ENCODE measurements at regions of chr11 and their contacts with region 1.

Region 1: DNA sequence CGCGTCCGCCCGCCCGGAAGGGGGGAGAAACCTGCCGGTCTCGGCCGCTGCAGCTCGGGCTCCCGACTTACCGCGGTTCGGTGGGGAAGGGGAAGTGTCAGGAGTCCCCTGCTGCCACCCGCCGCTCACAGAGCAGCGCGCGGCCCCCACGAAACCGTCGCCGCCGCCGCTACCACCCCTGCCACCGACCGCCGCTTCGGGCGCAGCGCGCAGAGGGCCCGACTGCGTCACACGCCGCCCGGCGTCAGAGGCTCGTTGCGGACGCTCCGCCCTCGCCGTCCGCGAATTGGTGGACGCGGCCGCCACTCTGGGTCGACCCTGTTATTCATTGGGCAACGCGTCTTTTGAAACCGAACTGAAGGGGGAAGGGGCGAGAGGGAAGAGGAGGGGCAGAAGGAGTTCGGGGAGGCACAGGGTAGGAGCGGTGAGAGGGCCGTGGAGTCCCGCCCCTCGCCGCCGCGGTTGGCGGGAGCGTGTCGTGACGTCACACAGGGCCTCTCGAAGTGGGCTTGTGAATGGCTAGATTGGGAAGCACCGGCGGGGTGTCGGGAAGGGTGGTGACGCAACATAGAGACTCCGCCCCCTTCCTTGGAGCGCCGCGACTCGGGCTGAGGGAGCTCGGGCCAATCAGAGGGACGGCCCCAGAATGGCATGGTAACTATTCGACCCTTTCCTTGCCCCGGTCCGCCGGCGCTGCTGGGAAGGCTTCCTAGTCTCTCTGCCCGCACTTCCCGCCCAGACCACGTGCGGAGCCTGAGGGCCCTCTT is at the start of gene NUP98:
- DNase-seq: peak; percentile 99
- ATAC-seq: peak; percentile 94
- H3K4me3 ChIP-seq: peak within 1 kb of the TSS; percentile 91
- H3K27ac ChIP-seq: peak within 1 kb of the TSS; percentile 97
- H3K4me1 ChIP-seq: peaks cover 7% of the 10 kb centered on the region; the same call in 1 of the 2 replicates
- H3K27me3 ChIP-seq: no peaks in the 10 kb centered on the region
- CTCF ChIP-seq: no peak
- EP300 ChIP-seq: no peak; a peak in 1 of 4 replicates
- POLR2A ChIP-seq: peak; percentile 97
- RAD21 ChIP-seq: no peak
- polyA plus RNA-seq, gene NUP98: 21.7 to 23.7 TPM

Region 2: GRCh38 chr11:3781423-3781822 is 16.1 kb before region 1 on chr11:
- CTCF ChIA-PET with region 1: interaction called, 16 read pairs
- POLR2A ChIA-PET with region 1: interaction called, 27 read pairs
- RAD21 ChIA-PET with region 1: interaction called, 4 read pairs
- SMC1A ChIA-PET with region 1: interaction called, 26 read pairs
- in situ Hi-C with region 1: no loop called
- intact Hi-C with region 1: no loop called
- DNase-seq: no peak
- ATAC-seq: no peak
- H3K4me3 ChIP-seq: no peak overlapping the region
- H3K27ac ChIP-seq: no peak overlapping the region; the same call in 1 of the 2 replicates
- H3K4me1 ChIP-seq: peaks cover 12% of the 10 kb centered on the region
- H3K27me3 ChIP-seq: no peaks in the 10 kb centered on the region
- CTCF ChIP-seq: no peak
- EP300 ChIP-seq: no peak
- POLR2A ChIP-seq: no peak
- RAD21 ChIP-seq: no peak

Region 3: DNA sequence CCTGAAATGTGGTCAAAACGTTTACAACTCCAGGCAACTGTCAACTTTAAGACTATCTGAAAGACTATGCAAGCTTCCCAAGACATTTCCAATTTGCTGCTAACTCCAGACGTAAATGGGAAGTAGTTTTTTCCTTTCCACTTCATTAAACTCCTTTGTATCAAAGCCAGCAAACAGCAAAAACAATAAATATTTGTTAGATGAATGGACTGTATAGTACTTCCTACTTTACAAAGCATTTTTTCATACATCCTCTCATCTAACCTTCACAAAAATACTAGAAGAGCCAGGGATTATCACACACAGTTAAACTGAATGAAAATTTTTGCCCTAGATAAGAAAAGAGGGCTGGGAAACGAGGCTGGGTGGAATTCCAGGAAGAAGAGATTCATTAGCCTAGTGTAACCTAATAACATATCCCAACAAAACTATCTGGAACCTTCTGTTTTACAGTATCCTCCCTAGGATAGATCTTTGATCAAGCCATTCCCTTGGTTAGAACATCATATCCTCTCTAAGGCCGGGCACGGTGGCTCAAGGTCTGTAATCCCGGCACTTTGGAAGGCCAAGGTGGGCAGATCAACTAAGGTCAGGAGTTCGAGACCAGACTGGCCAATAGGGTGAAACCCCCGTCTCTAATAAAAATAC is 10.6 kb before region 1 on chr11:
- CTCF ChIA-PET with region 1: interaction called, 16 read pairs
- POLR2A ChIA-PET with region 1: interaction called, 27 read pairs
- RAD21 ChIA-PET with region 1: interaction called, 4 read pairs
- SMC1A ChIA-PET with region 1: interaction called, 26 read pairs
- in situ Hi-C with region 1: no loop called
- intact Hi-C with region 1: no loop called
- DNase-seq: no peak
- ATAC-seq: no peak
- H3K4me3 ChIP-seq: no peak overlapping the region
- H3K27ac ChIP-seq: no peak overlapping the region
- H3K4me1 ChIP-seq: peaks cover 12% of the 10 kb centered on the region
- H3K27me3 ChIP-seq: no peaks in the 10 kb centered on the region
- CTCF ChIP-seq: no peak
- EP300 ChIP-seq: no peak
- POLR2A ChIP-seq: no peak
- RAD21 ChIP-seq: no peak

Region 4: GRCh38 chr11:3834664-3835461 is 37.4 kb after region 1 on chr11:
- CTCF ChIA-PET with region 1: no interaction called
- POLR2A ChIA-PET with region 1: interaction called, 22 read pairs
- RAD21 ChIA-PET with region 1: interaction called, 15 read pairs
- SMC1A ChIA-PET with region 1: interaction called, 3 read pairs
- in situ Hi-C with region 1: no loop called
- intact Hi-C with region 1: loop called (anchors 2 kb)
- DNase-seq: no peak
- ATAC-seq: peak; percentile 2; the same call in 1 of the 3 replicates
- H3K4me3 ChIP-seq: peak overlapping the region; percentile 37
- H3K27ac ChIP-seq: peak overlapping the region; percentile 50
- H3K4me1 ChIP-seq: peaks cover 41% of the 10 kb centered on the region
- H3K27me3 ChIP-seq: no peaks in the 10 kb centered on the region
- CTCF ChIP-seq: no peak
- EP300 ChIP-seq: no peak
- POLR2A ChIP-seq: no peak
- RAD21 ChIP-seq: no peak

Region 5: DNA sequence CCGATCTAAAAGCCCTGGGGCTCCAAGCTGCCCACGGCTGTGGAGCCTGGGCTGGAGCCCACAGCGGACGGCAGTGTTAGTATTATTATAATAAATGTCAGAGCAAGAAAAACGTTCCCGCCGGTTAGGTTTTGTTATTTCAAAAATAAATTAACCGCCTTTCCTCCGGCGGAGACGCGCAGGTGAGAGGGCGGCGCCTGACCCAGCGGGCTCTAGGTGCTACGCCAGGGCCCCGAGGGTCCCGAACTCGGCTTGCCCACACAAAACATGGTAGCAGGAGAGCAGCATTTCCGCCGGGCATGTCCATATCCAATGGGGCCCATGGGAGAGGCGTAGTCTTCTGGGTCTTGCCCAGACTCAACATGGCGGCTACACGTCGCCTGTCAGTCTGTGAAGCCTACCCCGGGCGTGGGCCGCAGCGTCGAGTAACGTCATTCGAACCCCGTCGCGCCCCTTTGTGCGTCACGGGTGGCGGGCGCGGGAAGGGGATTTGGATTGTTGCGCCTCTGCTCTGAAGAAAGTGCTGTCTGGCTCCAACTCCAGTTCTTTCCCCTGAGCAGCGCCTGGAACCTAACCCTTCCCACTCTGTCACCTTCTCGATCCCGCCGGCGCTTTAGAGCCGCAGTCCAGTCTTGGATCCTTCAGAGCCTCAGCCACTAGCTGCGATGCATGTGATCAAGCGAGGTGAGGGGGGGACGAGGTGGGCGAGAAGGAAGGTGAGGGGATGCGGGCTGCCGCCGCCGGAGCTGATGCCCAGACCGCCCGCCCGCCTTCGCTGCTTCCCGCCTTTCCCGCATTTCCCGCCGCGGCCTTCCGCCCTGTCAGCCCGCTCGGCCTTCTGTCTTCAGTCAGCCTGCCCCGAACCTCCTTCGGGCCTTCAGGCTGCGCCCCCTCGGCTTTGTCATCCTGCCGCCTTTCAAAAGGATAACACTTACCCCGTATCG is 297.1 kb after region 1 on chr11 and contains the start of gene RRM1:
- CTCF ChIA-PET with region 1: no interaction called
- POLR2A ChIA-PET with region 1: no interaction called
- RAD21 ChIA-PET with region 1: no interaction called
- SMC1A ChIA-PET with region 1: no interaction called
- in situ Hi-C with region 1: no loop called
- intact Hi-C with region 1: loop called (anchors 1 kb)
- DNase-seq: peak; percentile 82
- ATAC-seq: peak; percentile 97
- H3K4me3 ChIP-seq: peak within 1 kb of the TSS; percentile 90
- H3K27ac ChIP-seq: peak within 1 kb of the TSS; percentile 95
- H3K4me1 ChIP-seq: peaks cover 8% of the 10 kb centered on the region
- H3K27me3 ChIP-seq: no peaks in the 10 kb centered on the region
- CTCF ChIP-seq: no peak
- EP300 ChIP-seq: no peak
- POLR2A ChIP-seq: peak; percentile 84
- RAD21 ChIP-seq: no peak
- polyA plus RNA-seq, gene RRM1: 121 to 177 TPM